ENCODE measurements at regions of chr17 and their contacts with region 1.

Region 1: DNA sequence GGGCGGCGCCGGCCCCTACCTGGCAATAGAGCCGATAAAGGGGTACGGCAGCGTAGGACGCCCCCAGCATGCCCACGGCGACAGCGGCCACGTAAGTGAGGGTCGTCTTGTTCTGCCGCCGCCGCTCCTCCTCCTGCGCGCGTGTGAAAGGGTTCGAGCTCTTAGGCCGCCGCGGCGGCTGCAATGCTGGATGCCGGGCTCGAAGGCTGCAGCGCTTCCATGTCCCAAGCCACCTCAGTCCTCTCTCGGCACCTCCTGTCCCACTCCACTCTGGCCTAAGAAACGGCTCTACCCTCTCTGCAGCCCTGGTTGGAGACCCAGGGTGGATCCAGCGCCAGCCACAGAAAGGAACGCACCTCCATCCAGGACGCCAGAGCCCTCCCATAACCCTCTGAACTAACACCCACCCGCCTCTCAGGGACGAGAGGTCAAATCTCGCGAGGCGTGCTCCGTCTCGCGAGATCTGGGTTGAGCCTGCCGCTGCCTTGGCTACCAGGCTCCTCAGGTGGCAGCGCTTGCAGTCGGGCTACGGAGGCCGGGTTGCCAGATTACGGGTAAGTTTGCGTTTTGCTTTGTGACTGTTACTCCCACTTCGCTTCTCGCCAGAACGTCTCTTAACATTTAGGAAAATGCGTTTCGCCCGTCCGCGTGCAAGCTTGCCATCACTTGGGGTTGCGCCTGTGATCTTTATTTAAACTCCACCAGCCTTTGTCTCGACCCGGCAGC is at the starts of genes COX11 and STXBP4:
- DNase-seq: peak; percentile 98
- H3K4me3 ChIP-seq: peak within 1 kb of the TSS; percentile 93
- H3K27ac ChIP-seq: peak within 1 kb of the TSS; percentile 54
- H3K4me1 ChIP-seq: peaks cover 23% of the 10 kb centered on the region
- CTCF ChIP-seq: peak; percentile 59; the same call in 1 of the 2 replicates
- total RNA-seq, gene COX11: 75.6 and 128 TPM in 2 replicates
- total RNA-seq, gene STXBP4: 9.4 and 21.8 TPM in 2 replicates

Region 2: DNA sequence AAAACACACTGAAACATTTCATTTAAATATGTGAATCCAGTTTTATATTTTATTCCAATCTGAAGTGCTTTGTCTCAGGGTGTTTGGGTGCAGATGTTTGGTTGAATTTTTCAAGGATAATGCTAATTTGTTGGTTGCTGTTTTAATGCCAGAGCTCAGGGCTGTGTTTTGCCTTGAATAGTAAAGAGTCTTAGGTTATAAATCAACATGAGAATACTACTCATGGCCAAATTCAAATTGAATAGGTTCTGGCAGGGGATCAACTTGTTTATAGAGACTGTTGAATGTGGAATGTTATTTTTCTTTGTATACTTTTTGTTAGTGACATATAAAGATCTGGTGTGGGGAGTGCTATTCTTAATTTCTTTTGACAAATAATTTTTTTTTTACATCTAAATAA is 49.0 kb before region 1 on chr17:
- CTCF ChIA-PET with region 1: no interaction called
- POLR2A ChIA-PET with region 1: no interaction called
- intact Hi-C with region 1: no loop called
- DNase-seq: no peak
- H3K4me3 ChIP-seq: no peak overlapping the region
- H3K27ac ChIP-seq: no peak overlapping the region
- H3K4me1 ChIP-seq: no peaks in the 10 kb centered on the region
- CTCF ChIP-seq: no peak

Region 3: GRCh38 chr17:54932711-54933110 is 35.7 kb before region 1 on chr17:
- CTCF ChIA-PET with region 1: no interaction called
- POLR2A ChIA-PET with region 1: no interaction called
- intact Hi-C with region 1: no loop called
- DNase-seq: no peak
- H3K4me3 ChIP-seq: no peak overlapping the region
- H3K27ac ChIP-seq: no peak overlapping the region
- H3K4me1 ChIP-seq: no peaks in the 10 kb centered on the region
- CTCF ChIP-seq: no peak

Region 4: GRCh38 chr17:55168958-55169687 is 200.7 kb after region 1 on chr17:
- CTCF ChIA-PET with region 1: no interaction called
- POLR2A ChIA-PET with region 1: no interaction called
- intact Hi-C with region 1: loop called (anchors 5 kb)
- DNase-seq: peak; percentile 95
- H3K4me3 ChIP-seq: peak overlapping the region; percentile 48
- H3K27ac ChIP-seq: peak overlapping the region; percentile 94
- H3K4me1 ChIP-seq: peaks cover 78% of the 10 kb centered on the region
- CTCF ChIP-seq: no peak

Region 5: DNA sequence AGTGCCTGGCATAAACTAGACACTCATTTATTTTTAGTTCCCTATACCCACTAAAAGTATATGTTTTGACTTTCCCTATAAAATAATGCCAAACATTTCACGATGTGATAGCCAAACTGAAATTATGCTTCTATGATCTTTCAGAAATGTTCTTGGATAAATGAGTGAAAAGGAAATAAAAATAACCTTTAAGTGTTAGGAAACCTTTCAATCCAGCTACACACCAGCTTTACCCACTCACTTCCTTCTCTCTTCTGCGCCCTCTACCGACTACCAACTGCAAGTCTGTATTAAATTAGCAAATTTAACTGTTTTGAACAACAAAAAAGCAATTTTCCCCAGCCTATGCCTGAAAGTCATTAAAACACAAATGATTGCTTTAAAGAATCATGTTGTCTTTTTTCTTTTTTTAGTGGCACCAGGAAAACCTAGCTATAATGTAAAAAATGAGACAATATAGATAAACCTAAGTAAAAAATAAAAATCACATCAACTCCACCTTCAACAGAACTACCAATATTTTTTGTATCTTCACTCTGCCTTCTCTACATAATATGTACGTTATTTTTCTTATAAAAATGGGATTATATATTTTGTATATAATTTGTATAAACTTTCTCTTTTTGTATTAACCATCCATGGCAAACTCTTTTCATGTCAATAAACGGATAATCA is 767.4 kb after region 1 on chr17:
- CTCF ChIA-PET with region 1: no interaction called
- POLR2A ChIA-PET with region 1: no interaction called
- intact Hi-C with region 1: loop called (anchors 5 kb)
- DNase-seq: peak; percentile 65
- H3K4me3 ChIP-seq: no peak overlapping the region
- H3K27ac ChIP-seq: no peak overlapping the region
- H3K4me1 ChIP-seq: peaks cover 22% of the 10 kb centered on the region
- CTCF ChIP-seq: peak; percentile 96

Measured in OCI-LY7 (cell line).